ENCODE measurements at regions of chr3 and their contacts with region 1.

Region 1: GRCh38 chr3:124467980-124468902 is 262.0 kb upstream of the UMPS start:
- DNase-seq: peak in 1 of 2 donors; percentile 64
- ATAC-seq: peak in 3 of 4 donors; percentile 68 to 76 (median 74)
- H3K4me3 ChIP-seq: no peak overlapping the region
- H3K27ac ChIP-seq: no peak overlapping the region
- H3K4me1 ChIP-seq: no peaks in the 10 kb centered on the region
- H3K27me3 ChIP-seq: no peaks in the 10 kb centered on the region
- CTCF ChIP-seq: peak; percentile 87

Region 2: GRCh38 chr3:124014366-124014942 is 453.8 kb before region 1 on chr3:
- intact Hi-C with region 1: loop called in 1 of 2 experiments (anchors 5 kb)
- DNase-seq: no peak
- ATAC-seq: no peak
- H3K4me3 ChIP-seq: no peak overlapping the region
- H3K27ac ChIP-seq: no peak overlapping the region
- H3K4me1 ChIP-seq: no peaks in the 10 kb centered on the region
- H3K27me3 ChIP-seq: no peaks in the 10 kb centered on the region
- CTCF ChIP-seq: no peak

Region 3: DNA sequence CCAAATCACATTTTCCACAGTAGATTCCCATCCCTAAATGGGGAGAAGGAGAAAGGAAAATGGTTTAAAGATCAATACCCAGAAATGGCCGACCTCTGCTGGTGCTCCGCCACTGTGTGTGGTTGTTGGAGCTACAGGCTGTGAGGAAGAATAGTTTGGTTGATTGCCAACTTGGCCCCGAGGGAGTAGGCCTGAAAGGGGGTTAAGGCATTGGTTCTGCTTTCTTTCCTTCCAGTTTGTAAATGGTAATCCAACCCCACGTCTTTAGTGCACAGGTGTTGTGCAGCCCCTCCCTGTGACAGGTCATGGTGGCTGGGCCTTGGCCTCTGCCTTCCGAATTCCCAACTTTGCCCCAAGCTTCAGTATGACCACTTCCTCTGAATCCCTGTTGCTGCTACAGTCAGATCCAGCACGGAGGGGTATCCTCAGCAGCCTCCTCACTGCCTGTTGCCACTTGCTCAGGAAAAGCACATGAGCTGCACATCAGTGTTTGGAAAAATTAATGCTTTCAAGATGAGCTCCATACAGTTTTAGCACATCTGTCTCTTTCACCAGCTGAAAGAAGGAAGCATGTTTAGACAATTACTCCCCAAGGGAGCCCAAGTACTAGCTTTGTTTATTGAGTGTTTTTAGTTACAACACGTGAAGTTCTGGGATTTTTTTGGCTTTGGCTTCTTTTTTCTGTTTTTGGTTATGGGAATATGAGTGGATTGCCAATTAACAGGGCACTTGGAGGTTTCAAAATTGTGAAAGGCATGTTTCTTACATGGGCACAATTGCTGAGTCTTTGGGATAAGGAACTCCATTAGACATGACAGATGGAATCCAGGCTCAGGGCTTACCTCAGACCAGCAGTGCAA is 384.0 kb before region 1 on chr3:
- intact Hi-C with region 1: loop called in 1 of 2 experiments (anchors 5 kb)
- DNase-seq: no peak
- ATAC-seq: no peak
- H3K4me3 ChIP-seq: no peak overlapping the region
- H3K27ac ChIP-seq: no peak overlapping the region
- H3K4me1 ChIP-seq: peaks cover 4% of the 10 kb centered on the region
- H3K27me3 ChIP-seq: no peaks in the 10 kb centered on the region
- CTCF ChIP-seq: no peak

Region 4: GRCh38 chr3:124351430-124352148 is 116.7 kb before region 1 on chr3:
- intact Hi-C with region 1: loop called (anchors 5 to 10 kb)
- DNase-seq: no peak
- ATAC-seq: no peak
- H3K4me3 ChIP-seq: no peak overlapping the region
- H3K27ac ChIP-seq: no peak overlapping the region
- H3K4me1 ChIP-seq: no peaks in the 10 kb centered on the region
- H3K27me3 ChIP-seq: no peaks in the 10 kb centered on the region
- CTCF ChIP-seq: peak; percentile 47

Region 5: DNA sequence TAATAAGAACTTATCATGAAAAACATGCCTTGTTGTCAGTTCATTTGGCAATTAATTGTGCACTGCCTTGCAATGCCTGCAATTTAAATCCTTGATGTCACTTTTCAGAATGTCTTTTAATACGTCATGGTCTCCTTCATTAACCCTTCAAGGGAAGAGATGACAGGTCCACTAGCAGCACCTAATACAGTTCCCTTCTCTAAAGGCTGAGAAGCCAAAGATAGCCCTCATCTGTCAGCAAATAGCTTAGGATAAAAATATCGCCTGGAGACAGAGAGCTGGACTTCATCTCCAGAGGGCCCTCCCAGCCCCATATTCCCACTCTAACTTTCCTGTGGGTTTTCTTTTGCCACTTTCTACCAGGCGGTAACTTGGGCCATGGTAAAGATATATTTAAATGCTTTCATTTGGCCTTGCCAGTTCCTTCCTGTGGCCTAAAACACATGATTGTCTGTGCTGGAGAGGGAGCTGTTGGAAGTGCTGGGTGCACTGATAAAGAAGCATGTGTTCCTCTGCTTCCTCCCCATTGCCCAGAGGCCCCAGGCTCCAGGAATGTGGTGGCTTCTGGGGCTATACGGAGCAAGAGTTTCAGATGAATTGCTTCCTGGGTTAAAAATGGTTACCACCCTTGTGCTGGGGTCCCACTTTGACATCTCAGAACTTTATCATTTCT is 185.7 kb after region 1 on chr3:
- intact Hi-C with region 1: no loop called
- DNase-seq: no peak
- ATAC-seq: peak; percentile 79 to 96 (median 92)
- H3K4me3 ChIP-seq: no peak overlapping the region
- H3K27ac ChIP-seq: peak overlapping the region; percentile 24
- H3K4me1 ChIP-seq: peaks cover 17% of the 10 kb centered on the region
- H3K27me3 ChIP-seq: no peaks in the 10 kb centered on the region
- CTCF ChIP-seq: no peak